CD4-positive, alpha-beta T cell (primary cell): ENCODE measurements at regions of chr17 and their contacts with region 1.

Region 1: DNA sequence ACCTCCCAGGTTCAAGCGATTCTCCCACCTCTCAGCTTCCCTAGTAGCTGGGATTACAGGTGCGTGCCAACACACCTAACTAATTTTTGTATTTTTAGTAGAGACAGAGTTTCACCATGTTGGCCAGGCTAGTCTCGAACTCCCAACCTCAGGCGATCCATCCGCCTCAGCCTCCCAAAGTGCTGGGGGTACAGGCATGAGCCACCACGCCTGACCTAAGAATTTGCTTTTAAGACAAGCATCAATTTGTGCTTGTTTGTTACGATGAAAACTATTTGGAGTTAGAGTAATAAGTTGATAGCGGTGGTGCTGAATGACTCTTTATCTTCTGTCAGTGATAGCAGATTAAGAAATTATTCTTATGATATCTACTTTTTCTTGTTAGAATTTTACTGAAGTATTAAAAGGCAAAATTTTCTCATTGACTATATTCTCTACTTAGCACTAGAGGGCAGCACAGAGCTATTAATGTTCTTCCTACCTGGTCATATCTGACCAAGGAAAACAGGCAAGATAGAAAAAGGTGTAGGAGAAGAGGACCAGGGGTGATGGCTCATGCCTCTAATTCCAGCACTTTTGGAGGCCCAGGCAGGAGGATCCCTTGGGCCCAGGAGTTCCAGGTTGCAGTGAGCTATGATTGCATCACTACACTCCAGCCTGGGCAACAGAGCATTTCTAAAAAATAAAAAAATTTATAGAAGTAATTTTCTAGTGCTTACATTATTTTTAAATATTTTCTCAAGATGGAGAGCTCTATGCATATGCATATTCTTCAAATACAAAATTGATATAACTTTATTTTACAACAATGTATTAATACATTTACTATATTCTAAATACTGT is 24.5 kb downstream of the STXBP4 start:
- DNase-seq: peak in 5 of 14 experiments; percentile 0 to 75 (median 66)
- ATAC-seq: peak; percentile 65
- H3K4me3 ChIP-seq: no peak overlapping the region
- H3K4me3 Mint-ChIP-seq: no peak overlapping the region
- H3K27ac ChIP-seq: no peak overlapping the region
- H3K27ac Mint-ChIP-seq: no peak overlapping the region
- H3K4me1 ChIP-seq: no peaks in the 10 kb centered on the region
- H3K4me1 Mint-ChIP-seq: no peaks in the 10 kb centered on the region
- H3K27me3 ChIP-seq: no peaks in the 10 kb centered on the region
- H3K27me3 Mint-ChIP-seq: no peaks in the 10 kb centered on the region
- CTCF ChIP-seq: peak; percentile 84

Region 2: GRCh38 chr17:55037828-55038227 is 44.8 kb after region 1 on chr17:
- CTCF ChIA-PET with region 1: no interaction called
- POLR2A ChIA-PET with region 1: no interaction called
- intact Hi-C with region 1: no loop called
- DNase-seq: peak in 2 of 14 experiments; percentile 21 to 25
- ATAC-seq: no peak
- H3K4me3 ChIP-seq: no peak overlapping the region
- H3K4me3 Mint-ChIP-seq: no peak overlapping the region
- H3K27ac ChIP-seq: no peak overlapping the region
- H3K27ac Mint-ChIP-seq: no peak overlapping the region
- H3K4me1 ChIP-seq: no peaks in the 10 kb centered on the region
- H3K4me1 Mint-ChIP-seq: no peaks in the 10 kb centered on the region
- H3K27me3 ChIP-seq: no peaks in the 10 kb centered on the region
- H3K27me3 Mint-ChIP-seq: no peaks in the 10 kb centered on the region
- CTCF ChIP-seq: no peak

Region 3: GRCh38 chr17:55295411-55296170 is 302.6 kb after region 1 on chr17:
- CTCF ChIA-PET with region 1: interaction called, 5 read pairs
- POLR2A ChIA-PET with region 1: no interaction called
- intact Hi-C with region 1: loop called (anchors 1 kb)
- DNase-seq: peak; percentile 29 to 76 (median 47)
- ATAC-seq: peak; percentile 85
- H3K4me3 ChIP-seq: no peak overlapping the region
- H3K4me3 Mint-ChIP-seq: no peak overlapping the region
- H3K27ac ChIP-seq: no peak overlapping the region
- H3K27ac Mint-ChIP-seq: no peak overlapping the region
- H3K4me1 ChIP-seq: no peaks in the 10 kb centered on the region
- H3K4me1 Mint-ChIP-seq: no peaks in the 10 kb centered on the region
- H3K27me3 ChIP-seq: no peaks in the 10 kb centered on the region
- H3K27me3 Mint-ChIP-seq: no peaks in the 10 kb centered on the region
- CTCF ChIP-seq: peak; percentile 85

Region 4: GRCh38 chr17:55348749-55349354 is 355.8 kb after region 1 on chr17:
- CTCF ChIA-PET with region 1: interaction called, 17 read pairs
- POLR2A ChIA-PET with region 1: no interaction called
- intact Hi-C with region 1: loop called (anchors 1 to 2 kb)
- DNase-seq: peak in 13 of 14 experiments; percentile 5 to 74 (median 18)
- ATAC-seq: peak; percentile 64
- H3K4me3 ChIP-seq: no peak overlapping the region
- H3K4me3 Mint-ChIP-seq: no peak overlapping the region
- H3K27ac ChIP-seq: no peak overlapping the region
- H3K27ac Mint-ChIP-seq: no peak overlapping the region
- H3K4me1 ChIP-seq: peaks cover 19% of the 10 kb centered on the region
- H3K4me1 Mint-ChIP-seq: peaks cover 15% of the 10 kb centered on the region
- H3K27me3 ChIP-seq: no peaks in the 10 kb centered on the region
- H3K27me3 Mint-ChIP-seq: no peaks in the 10 kb centered on the region
- CTCF ChIP-seq: peak; percentile 83

Region 5: GRCh38 chr17:55356434-55357328 is 363.7 kb after region 1 on chr17:
- CTCF ChIA-PET with region 1: interaction called, 11 read pairs
- POLR2A ChIA-PET with region 1: no interaction called
- intact Hi-C with region 1: no loop called
- DNase-seq: peak; percentile 33 to 77 (median 57)
- ATAC-seq: peak; percentile 84
- H3K4me3 ChIP-seq: no peak overlapping the region
- H3K4me3 Mint-ChIP-seq: no peak overlapping the region
- H3K27ac ChIP-seq: no peak overlapping the region
- H3K27ac Mint-ChIP-seq: no peak overlapping the region
- H3K4me1 ChIP-seq: no peaks in the 10 kb centered on the region
- H3K4me1 Mint-ChIP-seq: peaks cover 6% of the 10 kb centered on the region
- H3K27me3 ChIP-seq: no peaks in the 10 kb centered on the region
- H3K27me3 Mint-ChIP-seq: peaks cover 10% of the 10 kb centered on the region
- CTCF ChIP-seq: peak; percentile 84

Region 6: DNA sequence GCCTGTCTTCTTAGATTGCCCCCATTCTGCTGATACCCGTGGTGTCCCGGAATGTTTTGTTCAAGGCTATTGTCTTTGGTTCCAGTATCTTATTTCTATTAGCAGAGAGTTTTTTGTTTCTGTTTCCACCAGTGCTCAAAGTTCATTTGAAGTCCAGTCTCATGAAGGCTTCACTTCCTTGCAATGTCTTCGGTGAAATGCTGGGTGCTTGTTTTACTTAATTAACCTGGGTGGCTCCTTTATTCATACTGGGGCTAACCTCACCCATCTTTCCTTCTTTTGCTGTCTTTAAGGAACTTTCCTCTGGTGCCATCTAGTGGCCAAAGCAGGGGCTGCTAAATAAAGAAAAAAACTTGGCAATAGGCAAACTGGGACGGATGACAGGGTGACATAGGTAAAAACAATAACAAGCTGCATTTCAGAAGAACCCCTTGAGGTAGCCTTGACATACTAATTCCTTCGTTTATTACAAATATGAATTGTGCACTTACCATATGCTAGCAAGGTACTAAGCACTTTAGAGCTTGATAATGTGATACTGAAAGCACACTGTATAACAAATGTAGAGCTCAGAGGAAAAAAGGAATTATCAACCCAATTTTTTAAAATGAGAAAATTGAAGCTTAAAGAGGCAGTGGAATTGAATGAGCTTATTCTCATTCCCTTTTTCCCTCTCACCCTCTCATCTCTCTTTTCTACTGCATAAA is 521.0 kb after region 1 on chr17:
- CTCF ChIA-PET with region 1: no interaction called
- POLR2A ChIA-PET with region 1: no interaction called
- intact Hi-C with region 1: loop called (anchors 2 to 5 kb)
- DNase-seq: peak; percentile 25 to 79 (median 68)
- ATAC-seq: peak; percentile 57
- H3K4me3 ChIP-seq: no peak overlapping the region
- H3K4me3 Mint-ChIP-seq: no peak overlapping the region
- H3K27ac ChIP-seq: no peak overlapping the region
- H3K27ac Mint-ChIP-seq: no peak overlapping the region
- H3K4me1 ChIP-seq: no peaks in the 10 kb centered on the region
- H3K4me1 Mint-ChIP-seq: no peaks in the 10 kb centered on the region
- H3K27me3 ChIP-seq: peaks cover 0 to 8% of the 10 kb centered on the region in 2 experiments
- H3K27me3 Mint-ChIP-seq: peaks cover 6% of the 10 kb centered on the region
- CTCF ChIP-seq: peak; percentile 97